ENCODE measurements at regions of chr6 and their contacts with region 1.

Region 1: DNA sequence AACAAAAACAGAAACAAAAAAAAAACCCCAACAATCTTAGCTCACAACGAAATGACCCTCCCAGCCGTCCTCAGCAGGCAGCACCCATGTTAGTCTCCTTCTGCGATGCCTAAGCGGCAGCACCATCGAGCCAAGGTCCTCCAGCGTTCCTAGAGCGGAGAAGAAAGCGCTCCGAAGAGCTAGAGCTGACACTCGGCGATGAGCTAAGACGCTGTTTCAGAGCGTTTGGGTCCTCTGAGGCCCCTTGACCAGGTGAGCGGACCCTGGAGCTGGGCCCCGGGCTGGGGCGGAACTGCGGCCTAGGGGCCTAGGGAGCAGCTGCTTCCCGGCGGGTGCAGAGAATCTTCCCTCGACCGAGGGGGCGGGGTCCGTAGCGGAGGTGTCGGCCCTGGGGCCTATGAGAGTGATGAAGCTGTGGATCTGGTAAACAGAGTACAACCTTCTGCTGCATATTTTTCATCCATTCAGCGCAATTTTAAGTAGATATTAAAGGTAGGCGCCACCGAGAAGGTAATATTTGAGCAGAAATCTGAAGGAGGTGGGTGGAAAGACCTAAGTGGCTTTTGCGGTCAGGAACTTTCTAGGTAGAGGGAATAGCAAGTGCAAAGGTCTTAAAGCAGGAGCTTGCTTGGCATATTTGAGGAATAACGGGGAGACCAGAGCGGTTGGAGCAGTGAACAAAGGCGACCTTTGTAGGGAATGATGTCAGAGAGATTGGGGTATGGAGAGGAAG is at the start of gene ZSCAN26:
- DNase-seq: peak; percentile 89 to 95
- ATAC-seq: peak; percentile 97
- H3K4me3 ChIP-seq: peak within 1 kb of the TSS; percentile 72 to 77
- H3K27ac ChIP-seq: peak within 1 kb of the TSS in 1 of 2 donors; percentile 11
- H3K4me1 ChIP-seq: peaks cover 0 to 3% of the 10 kb centered on the region in 2 donors
- H3K27me3 ChIP-seq: no peaks in the 10 kb centered on the region
- total RNA-seq, gene ZSCAN26: 15.7 to 22.8 TPM

Region 2: GRCh38 chr6:28225056-28225834 is 41.9 kb before region 1 on chr6 and contains the start of gene ZSCAN9:
- intact Hi-C with region 1: loop called in 1 of 2 experiments (anchors 5 kb)
- DNase-seq: peak; percentile 90 to 95
- ATAC-seq: peak; percentile 96
- H3K4me3 ChIP-seq: peak within 1 kb of the TSS; percentile 12 to 89
- H3K27ac ChIP-seq: peak within 1 kb of the TSS in 1 of 2 donors; percentile 3
- H3K4me1 ChIP-seq: peaks cover 2 to 3% of the 10 kb centered on the region in 2 donors
- H3K27me3 ChIP-seq: no peaks in the 10 kb centered on the region
- total RNA-seq, gene ZSCAN9: 15.4 to 18.5 TPM

Region 3: DNA sequence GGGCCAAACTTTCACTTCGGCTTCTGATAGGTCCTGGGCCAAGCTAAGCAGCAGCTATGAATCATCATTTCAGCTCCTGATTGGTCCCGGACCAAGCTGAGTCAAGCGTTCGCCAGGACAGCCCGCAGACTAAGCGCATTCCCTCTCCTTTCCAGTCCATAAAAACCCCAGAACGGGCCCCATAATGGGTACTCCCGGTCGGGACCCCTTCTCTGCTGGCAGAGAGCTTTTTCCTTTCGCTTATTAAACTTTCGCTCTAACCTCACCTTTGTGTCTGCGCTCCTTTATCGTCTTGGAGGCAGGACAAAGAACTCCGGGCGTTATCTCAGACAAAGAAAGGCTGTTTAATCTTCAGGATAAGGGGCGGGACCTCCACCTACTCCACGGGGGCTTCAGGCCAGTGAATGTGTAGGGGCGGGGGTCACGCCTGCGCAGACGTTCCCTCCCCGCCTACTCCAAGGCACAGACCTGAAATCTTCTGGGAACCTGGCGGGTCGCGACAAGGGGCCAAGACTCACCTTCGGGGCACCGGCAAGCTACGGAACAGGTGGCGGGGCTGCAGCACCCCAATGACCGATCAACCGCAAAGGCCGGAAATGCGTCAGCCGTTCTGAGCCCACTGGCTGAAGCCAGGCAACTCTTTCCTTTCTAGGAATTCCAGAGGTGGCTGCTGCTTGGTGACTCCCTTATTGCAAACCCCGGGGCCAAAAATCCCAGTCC is 68.6 kb after region 1 on chr6 and contains the start of gene ZSCAN31:
- intact Hi-C with region 1: loop called in 1 of 2 experiments (anchors 5 kb)
- DNase-seq: peak; percentile 96 to 98
- ATAC-seq: peak; percentile 98
- H3K4me3 ChIP-seq: peak within 1 kb of the TSS; percentile 82 to 84
- H3K27ac ChIP-seq: peak within 1 kb of the TSS; percentile 92 to 95
- H3K4me1 ChIP-seq: no peaks in the 10 kb centered on the region
- H3K27me3 ChIP-seq: no peaks in the 10 kb centered on the region
- total RNA-seq, gene ZSCAN31: 8.3 to 10.9 TPM